CD8-positive, alpha-beta T cell (primary cell): ENCODE measurements at regions of chr1 and their contacts with region 1.

Region 1: GRCh38 chr1:169460191-169460833 is 25.4 kb downstream of the SLC19A2 start:
- DNase-seq: peak in 4 of 9 experiments; percentile 7 to 58 (median 34)
- ATAC-seq: peak; percentile 31
- H3K4me3 ChIP-seq: peak overlapping the region in 1 of 2 experiments; percentile 41
- H3K4me3 Mint-ChIP-seq: peak overlapping the region; percentile 70
- H3K27ac ChIP-seq: no peak overlapping the region
- H3K27ac Mint-ChIP-seq: no peak overlapping the region
- H3K4me1 ChIP-seq: no peaks in the 10 kb centered on the region
- H3K4me1 Mint-ChIP-seq: peaks cover 20% of the 10 kb centered on the region
- H3K27me3 ChIP-seq: no peaks in the 10 kb centered on the region
- H3K27me3 Mint-ChIP-seq: peaks cover 15% of the 10 kb centered on the region
- CTCF ChIP-seq: no peak

Region 2: DNA sequence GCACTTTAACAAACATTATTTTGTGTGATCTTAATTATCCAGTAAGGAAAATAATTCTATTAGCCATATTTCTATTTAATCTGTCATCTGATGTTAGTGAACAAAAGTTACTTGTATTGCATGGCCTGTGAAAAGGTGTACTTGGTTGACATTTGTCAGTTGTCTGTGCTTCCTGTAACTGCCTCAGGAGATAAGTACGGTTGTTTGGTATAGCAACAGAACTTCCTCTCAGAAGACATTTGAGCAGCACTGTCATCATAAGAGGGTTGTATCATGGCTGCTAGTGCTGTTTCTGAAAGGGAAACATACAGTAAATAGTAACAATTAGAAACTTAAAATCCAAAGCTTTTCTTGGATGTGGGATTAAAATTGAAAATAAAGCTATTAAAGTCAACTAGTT is 88.9 kb before region 1 on chr1:
- CTCF ChIA-PET with region 1: no interaction called
- POLR2A ChIA-PET with region 1: no interaction called
- intact Hi-C with region 1: no loop called
- DNase-seq: peak in 2 of 9 experiments; percentile 16 to 41
- ATAC-seq: no peak
- H3K4me3 ChIP-seq: no peak overlapping the region
- H3K4me3 Mint-ChIP-seq: no peak overlapping the region
- H3K27ac ChIP-seq: no peak overlapping the region
- H3K27ac Mint-ChIP-seq: peak overlapping the region; percentile 30
- H3K4me1 ChIP-seq: peaks cover 18% of the 10 kb centered on the region
- H3K4me1 Mint-ChIP-seq: peaks cover 35% of the 10 kb centered on the region
- H3K27me3 ChIP-seq: no peaks in the 10 kb centered on the region
- H3K27me3 Mint-ChIP-seq: no peaks in the 10 kb centered on the region
- CTCF ChIP-seq: no peak

Region 3: DNA sequence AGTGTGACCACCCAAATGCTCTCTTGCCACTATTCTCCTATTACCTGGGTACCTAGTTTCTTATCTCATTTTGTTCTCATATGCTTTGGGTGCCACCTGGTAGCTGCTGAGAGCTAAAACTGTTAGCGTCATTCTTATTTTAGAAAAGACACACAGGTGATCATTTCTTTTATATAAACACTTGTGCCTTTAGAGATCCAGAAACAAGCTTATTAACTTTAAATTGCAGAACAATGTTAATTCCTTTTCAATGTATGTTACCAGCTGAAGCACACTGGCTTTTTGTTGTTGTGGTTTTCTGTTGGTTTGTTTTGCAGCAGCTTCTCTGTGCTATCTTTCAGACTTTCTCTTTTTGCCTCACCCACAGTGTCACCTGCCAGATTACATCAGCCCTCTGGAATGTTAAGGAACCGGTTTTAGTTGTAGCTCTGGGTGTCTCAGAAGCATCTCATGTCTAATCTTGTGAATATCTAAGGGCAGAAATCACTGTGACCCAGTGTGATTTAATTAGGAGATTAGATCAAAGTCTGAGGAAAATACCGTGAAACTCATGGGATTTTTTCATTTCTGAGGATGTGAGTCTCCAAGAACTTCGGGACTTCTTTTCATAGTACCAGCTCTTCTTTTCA is 68.9 kb after region 1 on chr1:
- CTCF ChIA-PET with region 1: no interaction called
- POLR2A ChIA-PET with region 1: no interaction called
- intact Hi-C with region 1: loop called in 1 of 2 experiments (anchors 5 kb)
- DNase-seq: no peak
- ATAC-seq: no peak
- H3K4me3 ChIP-seq: no peak overlapping the region
- H3K4me3 Mint-ChIP-seq: peak overlapping the region; percentile 1
- H3K27ac ChIP-seq: no peak overlapping the region
- H3K27ac Mint-ChIP-seq: no peak overlapping the region
- H3K4me1 ChIP-seq: no peaks in the 10 kb centered on the region
- H3K4me1 Mint-ChIP-seq: peaks cover 9% of the 10 kb centered on the region
- H3K27me3 ChIP-seq: no peaks in the 10 kb centered on the region
- H3K27me3 Mint-ChIP-seq: peaks cover 5% of the 10 kb centered on the region
- CTCF ChIP-seq: no peak